Endothelial cell of umbilical vein (primary cell): ENCODE measurements at regions of chr15 and their contacts with region 1.

Region 1: DNA sequence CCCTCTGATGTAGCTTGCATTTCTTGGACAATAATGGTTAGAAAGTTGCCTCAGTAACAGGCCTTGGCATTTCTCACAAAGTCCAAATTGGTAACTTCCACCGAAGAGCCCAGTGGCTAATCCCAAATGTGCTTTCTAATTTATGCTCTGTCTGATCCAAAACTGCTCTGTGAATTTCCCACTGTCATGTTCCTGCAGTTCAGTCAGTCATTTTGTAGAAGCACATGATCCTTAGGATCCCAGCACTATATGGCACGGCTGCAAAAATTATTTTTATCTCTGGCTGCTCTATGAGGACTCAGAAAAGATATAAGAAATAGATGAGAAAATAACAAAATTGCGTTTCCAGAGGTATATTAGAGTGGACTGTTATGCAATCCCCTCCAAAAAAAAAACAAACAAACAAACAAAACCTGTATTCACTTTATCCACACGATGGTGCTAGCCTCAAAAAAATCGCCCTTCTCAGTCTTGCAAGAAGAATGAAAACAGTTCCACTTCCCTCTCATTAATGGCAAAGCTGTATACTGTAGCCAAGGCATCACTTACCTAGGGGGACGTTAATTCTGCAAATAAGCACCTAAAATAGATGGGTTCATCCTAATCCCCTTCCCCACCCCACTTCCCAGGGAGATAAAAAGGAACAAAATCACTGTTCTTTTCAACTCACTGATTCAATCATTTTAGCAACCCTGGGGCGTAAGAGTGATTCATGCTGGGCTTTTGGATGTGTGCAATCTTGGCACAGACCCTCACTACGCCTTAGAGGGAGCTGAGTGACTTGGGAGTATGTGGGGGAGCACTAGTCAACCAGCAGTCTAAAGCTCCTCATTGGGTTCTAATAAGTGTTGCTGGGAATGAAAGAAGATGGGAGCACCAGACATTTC is 61.3 kb downstream of the TMCO5A start:
- DNase-seq: peak; percentile 58
- H3K4me3 ChIP-seq: no peak overlapping the region
- H3K27ac ChIP-seq: no peak overlapping the region
- H3K4me1 ChIP-seq: no peaks in the 10 kb centered on the region
- H3K27me3 ChIP-seq: peaks cover 19 to 49% of the 10 kb centered on the region in 2 experiments
- CTCF ChIP-seq: peak; percentile 43 to 46
- POLR2A ChIP-seq: no peak

Region 2: DNA sequence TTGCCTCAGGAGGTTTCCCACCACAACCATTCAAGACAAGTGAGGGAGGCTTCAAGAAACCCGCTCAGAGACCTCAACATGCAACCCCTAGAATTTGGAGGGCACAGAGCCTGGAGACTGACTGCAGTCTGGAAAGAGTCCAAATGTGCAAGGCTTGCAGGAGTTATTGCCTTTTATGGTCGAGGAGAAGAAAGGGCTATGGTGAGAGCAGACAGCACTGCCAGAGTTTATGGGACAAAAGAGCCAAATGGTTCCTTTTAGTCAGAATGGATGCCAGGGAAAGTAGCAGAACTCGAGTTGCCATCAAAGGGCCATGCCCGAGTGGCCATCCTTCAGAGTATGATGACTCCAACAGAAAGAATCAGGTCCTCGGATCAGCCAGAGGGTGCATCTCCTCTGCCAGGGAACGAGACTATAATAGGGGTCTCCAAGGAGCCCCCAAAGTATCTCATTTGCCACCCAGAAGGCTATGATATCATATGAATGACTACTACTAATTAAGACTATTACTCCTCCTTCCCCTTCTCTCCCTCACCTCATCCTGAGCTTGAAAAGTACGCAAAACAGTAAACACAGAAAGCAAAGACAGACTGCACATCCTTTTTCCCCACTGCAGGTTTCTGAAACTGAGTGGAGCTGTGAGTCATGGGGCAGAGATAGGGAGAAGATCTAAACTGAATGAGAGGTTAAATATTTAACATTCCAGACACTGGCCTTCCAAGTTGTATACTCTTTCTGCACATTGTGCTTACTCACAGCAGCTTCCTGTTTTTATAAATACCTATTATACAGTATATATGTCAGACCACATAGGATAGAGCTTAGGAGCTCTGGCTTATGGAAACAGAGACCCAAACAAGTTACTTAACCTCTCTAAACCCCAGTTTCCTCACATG is 95.1 kb before region 1 on chr15:
- CTCF ChIA-PET with region 1: no interaction called
- POLR2A ChIA-PET with region 1: no interaction called
- dilution Hi-C with region 1: no loop called
- intact Hi-C with region 1: no loop called
- DNase-seq: peak; percentile 47
- H3K4me3 ChIP-seq: no peak overlapping the region
- H3K27ac ChIP-seq: no peak overlapping the region
- H3K4me1 ChIP-seq: peaks cover 31% of the 10 kb centered on the region
- H3K27me3 ChIP-seq: peaks cover 3 to 15% of the 10 kb centered on the region in 2 experiments
- CTCF ChIP-seq: no peak
- POLR2A ChIP-seq: no peak

Region 3: DNA sequence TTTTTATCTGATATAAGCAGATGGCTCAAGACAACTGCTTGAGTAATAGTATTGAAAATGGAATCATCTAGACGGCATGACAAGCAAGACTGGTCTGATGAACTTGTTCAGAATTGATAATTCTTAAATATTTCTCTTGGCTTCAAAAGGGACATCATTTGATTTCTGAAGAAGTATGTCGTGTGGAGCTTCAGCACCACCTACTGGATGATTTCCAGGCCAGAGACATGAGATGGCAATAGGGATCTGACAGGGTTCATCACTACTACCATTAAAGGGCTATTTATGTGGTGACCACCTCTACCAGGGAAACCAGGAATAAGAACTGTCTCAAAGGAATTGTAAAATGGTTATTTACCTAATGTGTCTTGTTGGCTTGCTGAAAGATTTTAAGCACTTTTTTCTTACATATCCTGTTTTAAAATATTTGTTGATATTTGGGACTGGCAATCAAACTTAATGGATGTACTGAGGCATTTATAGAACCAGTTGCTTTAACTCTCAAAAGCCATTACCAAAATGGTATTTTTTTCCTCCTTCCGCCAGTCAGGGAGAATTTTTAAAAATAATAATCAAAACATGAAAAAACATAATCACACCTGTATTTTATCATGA is 358.7 kb after region 1 on chr15:
- CTCF ChIA-PET with region 1: interaction called, 110 read pairs
- POLR2A ChIA-PET with region 1: no interaction called
- dilution Hi-C with region 1: loop called (anchors 25 kb)
- intact Hi-C with region 1: loop called (anchors 2 kb)
- DNase-seq: peak; percentile 80
- H3K4me3 ChIP-seq: no peak overlapping the region
- H3K27ac ChIP-seq: no peak overlapping the region
- H3K4me1 ChIP-seq: no peaks in the 10 kb centered on the region
- H3K27me3 ChIP-seq: no peaks in the 10 kb centered on the region
- CTCF ChIP-seq: peak; percentile 62 to 69
- POLR2A ChIP-seq: no peak

Region 4: GRCh38 chr15:38389924-38390542 is 394.3 kb after region 1 on chr15:
- CTCF ChIA-PET with region 1: interaction called, 49 read pairs
- POLR2A ChIA-PET with region 1: no interaction called
- dilution Hi-C with region 1: no loop called
- intact Hi-C with region 1: loop called (anchors 1 kb)
- DNase-seq: peak; percentile 68
- H3K4me3 ChIP-seq: no peak overlapping the region
- H3K27ac ChIP-seq: no peak overlapping the region
- H3K4me1 ChIP-seq: no peaks in the 10 kb centered on the region
- H3K27me3 ChIP-seq: peaks cover 0 to under 1% of the 10 kb centered on the region in 2 experiments
- CTCF ChIP-seq: peak; percentile 80 to 84
- POLR2A ChIP-seq: no peak

Region 5: GRCh38 chr15:38453971-38454695 is 458.4 kb after region 1 on chr15 and contains the start of gene FAM98B:
- CTCF ChIA-PET with region 1: interaction called, 10 read pairs
- POLR2A ChIA-PET with region 1: no interaction called
- dilution Hi-C with region 1: no loop called
- intact Hi-C with region 1: no loop called
- DNase-seq: peak; percentile 86
- H3K4me3 ChIP-seq: peak within 1 kb of the TSS; percentile 54 to 96 (median 83)
- H3K27ac ChIP-seq: peak within 1 kb of the TSS; percentile 75
- H3K4me1 ChIP-seq: peaks cover 9% of the 10 kb centered on the region
- H3K27me3 ChIP-seq: peaks cover 2 to 19% of the 10 kb centered on the region in 2 experiments
- CTCF ChIP-seq: no peak
- POLR2A ChIP-seq: peak; percentile 79
- total RNA-seq, gene FAM98B: 22.3 and 33.1 TPM in 2 replicates

Region 6: GRCh38 chr15:38690689-38691332 is 695.1 kb after region 1 on chr15:
- CTCF ChIA-PET with region 1: interaction called, 67 read pairs
- POLR2A ChIA-PET with region 1: no interaction called
- dilution Hi-C with region 1: no loop called
- intact Hi-C with region 1: no loop called
- DNase-seq: peak; percentile 84
- H3K4me3 ChIP-seq: no peak overlapping the region
- H3K27ac ChIP-seq: no peak overlapping the region
- H3K4me1 ChIP-seq: no peaks in the 10 kb centered on the region
- H3K27me3 ChIP-seq: peaks cover 9 to 24% of the 10 kb centered on the region in 2 experiments
- CTCF ChIP-seq: peak; percentile 71 to 86
- POLR2A ChIP-seq: no peak